Activated B cell treated with CpG ODN at 0.5 μM for 24 hours (primary cell): ENCODE measurements at regions of chr19 and their contacts with region 1.

Region 1: DNA sequence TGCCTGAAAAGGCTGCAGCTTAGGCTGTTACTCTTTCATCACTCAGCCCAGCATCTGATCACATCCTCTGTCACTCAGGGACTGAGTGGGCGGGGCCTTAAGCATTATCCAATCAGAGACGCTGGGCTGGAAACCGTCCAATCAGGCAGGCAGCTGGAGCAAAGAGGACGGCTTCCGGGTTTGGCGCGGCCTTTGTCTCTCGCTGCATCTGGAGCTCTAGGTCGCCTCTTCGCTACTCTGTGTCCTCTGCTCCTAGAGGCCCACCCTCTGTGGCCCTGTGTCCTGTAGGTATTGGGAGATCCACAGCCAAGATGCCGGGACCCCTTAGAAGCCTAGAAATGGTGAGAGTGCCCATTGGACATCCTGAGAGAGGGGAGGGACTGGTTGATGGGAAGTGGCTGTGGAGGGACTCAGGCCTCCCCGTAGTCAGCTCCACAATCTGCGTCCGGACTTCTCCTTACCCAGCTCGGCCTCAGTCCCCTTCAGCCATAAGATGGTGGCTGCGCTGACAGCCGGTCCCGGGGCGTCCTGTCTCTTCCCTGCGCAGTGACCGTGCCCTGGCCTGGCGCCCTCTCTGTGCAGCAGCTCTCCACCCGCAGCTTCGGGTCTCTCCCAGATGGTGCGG is at the start of gene ZNF486:
- DNase-seq: peak; percentile 80
- ATAC-seq: peak; percentile 96
- H3K4me3 Mint-ChIP-seq: peak within 1 kb of the TSS; percentile 99
- H3K27ac Mint-ChIP-seq: peak within 1 kb of the TSS; percentile 97
- H3K4me1 Mint-ChIP-seq: peaks cover 59% of the 10 kb centered on the region
- H3K27me3 Mint-ChIP-seq: no peaks in the 10 kb centered on the region
- CTCF ChIP-seq: no peak
- total RNA-seq, gene ZNF486: 13.5 and 16.2 TPM in 2 replicates

Region 2: GRCh38 chr19:19732579-19733501 is 434.3 kb before region 1 on chr19 and contains the start of gene ZNF14:
- CTCF ChIA-PET with region 1: no interaction called
- POLR2A ChIA-PET with region 1: no interaction called
- intact Hi-C with region 1: loop called (anchors 2 kb)
- DNase-seq: peak; percentile 79
- ATAC-seq: peak; percentile 99
- H3K4me3 Mint-ChIP-seq: peak within 1 kb of the TSS; percentile 99
- H3K27ac Mint-ChIP-seq: peak within 1 kb of the TSS; percentile 96
- H3K4me1 Mint-ChIP-seq: peaks cover 28% of the 10 kb centered on the region
- H3K27me3 Mint-ChIP-seq: no peaks in the 10 kb centered on the region
- CTCF ChIP-seq: no peak
- total RNA-seq, gene ZNF14: 11.8 and 13.4 TPM in 2 replicates

Region 3: GRCh38 chr19:19997656-19998268 is 169.4 kb before region 1 on chr19:
- CTCF ChIA-PET with region 1: interaction called, 12 read pairs
- POLR2A ChIA-PET with region 1: no interaction called
- intact Hi-C with region 1: no loop called
- DNase-seq: peak; percentile 29
- ATAC-seq: peak; percentile 64
- H3K4me3 Mint-ChIP-seq: no peak overlapping the region
- H3K27ac Mint-ChIP-seq: no peak overlapping the region
- H3K4me1 Mint-ChIP-seq: no peaks in the 10 kb centered on the region
- H3K27me3 Mint-ChIP-seq: no peaks in the 10 kb centered on the region
- CTCF ChIP-seq: peak; percentile 45

Region 4: DNA sequence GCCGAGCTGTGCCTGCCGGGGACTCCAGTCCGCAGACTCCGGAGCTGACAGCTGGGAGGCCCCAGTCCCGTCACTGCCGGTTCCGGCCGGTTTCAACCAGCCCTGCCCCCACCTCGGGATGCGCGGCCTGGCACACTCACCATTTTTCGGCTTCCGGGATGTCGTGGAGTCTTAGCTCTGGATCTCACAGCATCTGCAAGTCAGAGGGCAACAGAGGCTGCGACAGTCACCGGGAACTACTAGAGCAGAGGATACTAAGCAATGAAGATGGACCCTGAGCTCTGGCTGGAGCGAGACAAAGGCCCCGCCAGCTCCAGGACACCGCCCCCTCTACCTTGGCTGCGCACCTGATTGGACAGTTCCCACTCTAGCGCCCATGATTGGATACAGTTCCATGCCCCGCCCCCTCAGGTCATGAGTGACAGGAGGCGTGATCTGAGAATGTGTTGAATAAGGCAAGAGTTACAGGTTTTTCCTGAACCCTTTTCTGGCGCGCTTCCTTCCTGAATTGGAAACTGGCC is 127.9 kb before region 1 on chr19 and contains the start of gene ZNF682:
- CTCF ChIA-PET with region 1: no interaction called
- POLR2A ChIA-PET with region 1: interaction called, 15 read pairs
- intact Hi-C with region 1: loop called (anchors 5 kb)
- DNase-seq: peak; percentile 85
- ATAC-seq: peak; percentile 100
- H3K4me3 Mint-ChIP-seq: peak within 1 kb of the TSS; percentile 98
- H3K27ac Mint-ChIP-seq: peak within 1 kb of the TSS; percentile 92
- H3K4me1 Mint-ChIP-seq: peaks cover 14% of the 10 kb centered on the region
- H3K27me3 Mint-ChIP-seq: no peaks in the 10 kb centered on the region
- CTCF ChIP-seq: no peak
- total RNA-seq, gene ZNF682: 15.5 and 19.9 TPM in 2 replicates

Region 5: DNA sequence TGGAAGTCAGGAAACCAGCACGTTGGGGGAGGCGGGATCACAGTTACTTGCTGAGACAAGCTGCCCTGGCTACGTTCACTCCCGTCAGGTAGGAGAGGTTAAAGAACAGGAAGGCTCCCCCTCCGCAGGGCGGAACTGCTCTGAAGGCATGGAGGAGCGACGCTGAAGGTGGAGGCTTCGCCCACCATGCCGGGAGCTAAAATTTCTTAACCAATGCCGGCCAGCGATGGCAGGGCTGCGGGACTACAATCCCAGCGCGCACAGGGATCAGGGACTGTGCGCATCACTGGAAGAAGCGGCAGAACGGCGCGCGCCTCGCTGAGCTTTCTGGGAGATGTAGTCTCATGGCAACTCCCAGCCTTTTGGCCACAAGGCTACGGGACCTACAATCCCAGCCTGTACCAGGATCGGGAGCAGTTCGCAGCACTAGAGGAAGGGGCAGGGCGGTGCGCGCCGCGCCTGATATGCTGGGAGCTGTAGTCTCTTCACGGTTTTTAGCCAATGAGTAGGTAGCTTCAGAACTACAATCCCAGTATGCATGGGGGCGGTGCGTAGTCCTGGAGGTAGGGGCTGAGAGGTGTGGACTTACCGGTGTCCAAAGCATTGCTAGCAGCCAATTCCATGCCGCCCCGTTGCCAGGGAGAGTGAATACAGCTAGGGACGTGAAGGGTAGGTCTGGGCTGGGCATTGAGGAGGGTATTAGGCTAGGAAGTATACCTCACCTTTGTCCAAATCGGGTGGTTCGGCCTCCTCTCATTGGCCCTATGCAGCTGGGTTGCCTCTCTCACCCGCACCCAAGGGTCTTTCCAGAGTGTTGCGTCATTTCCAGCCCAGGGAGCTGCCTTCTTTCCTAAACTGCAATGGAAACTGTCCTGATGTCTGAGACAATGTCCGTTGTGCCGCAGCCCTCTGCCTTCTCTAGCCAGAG is 115.0 kb before region 1 on chr19:
- CTCF ChIA-PET with region 1: no interaction called
- POLR2A ChIA-PET with region 1: interaction called, 14 read pairs
- intact Hi-C with region 1: loop called (anchors 1 kb)
- DNase-seq: peak; percentile 55
- ATAC-seq: peak; percentile 95
- H3K4me3 Mint-ChIP-seq: peak overlapping the region; percentile 98
- H3K27ac Mint-ChIP-seq: peak overlapping the region; percentile 96
- H3K4me1 Mint-ChIP-seq: peaks cover 14% of the 10 kb centered on the region
- H3K27me3 Mint-ChIP-seq: no peaks in the 10 kb centered on the region
- CTCF ChIP-seq: no peak

Region 6: DNA sequence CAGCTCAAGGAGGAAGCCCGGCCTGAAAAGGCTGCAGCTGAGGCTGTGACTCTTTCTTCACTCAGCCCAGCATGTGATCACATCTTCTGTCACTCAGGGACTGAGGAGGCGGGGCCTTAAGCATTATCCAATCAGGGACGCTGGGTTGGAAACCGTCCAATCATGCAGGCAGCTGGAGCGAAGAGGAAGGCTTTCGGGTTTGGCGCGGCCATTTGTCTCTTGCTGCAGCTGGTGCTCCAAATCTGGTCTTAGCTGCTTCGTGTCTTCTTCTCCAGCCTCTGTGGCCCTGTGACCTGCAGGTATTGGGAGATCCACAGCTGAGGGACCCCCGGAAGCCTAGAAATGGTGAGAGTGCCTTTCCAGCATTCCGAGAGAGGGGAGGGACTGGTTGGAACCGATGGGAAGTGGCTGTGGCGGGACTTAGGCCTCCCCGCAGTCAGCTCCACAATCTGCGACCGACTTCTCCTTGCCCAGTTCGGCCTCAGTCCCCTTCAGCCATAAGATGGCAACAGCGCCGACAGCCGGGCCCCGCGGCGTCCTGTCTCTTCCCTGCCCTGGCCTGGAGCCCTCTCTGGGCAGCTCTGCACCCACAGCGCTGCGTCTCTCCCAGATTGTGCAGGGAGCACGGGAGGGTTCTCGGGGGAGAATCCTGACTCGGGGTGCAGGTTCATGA is 89.2 kb before region 1 on chr19 and contains the start of gene ZNF90:
- CTCF ChIA-PET with region 1: no interaction called
- POLR2A ChIA-PET with region 1: interaction called, 13 read pairs
- intact Hi-C with region 1: loop called (anchors 1 kb)
- DNase-seq: peak; percentile 73
- ATAC-seq: peak; percentile 99
- H3K4me3 Mint-ChIP-seq: peak within 1 kb of the TSS; percentile 96
- H3K27ac Mint-ChIP-seq: peak within 1 kb of the TSS; percentile 69
- H3K4me1 Mint-ChIP-seq: peaks cover 18% of the 10 kb centered on the region
- H3K27me3 Mint-ChIP-seq: no peaks in the 10 kb centered on the region
- CTCF ChIP-seq: no peak
- total RNA-seq, gene ZNF90: 9.8 and 12.5 TPM in 2 replicates

Region 7: DNA sequence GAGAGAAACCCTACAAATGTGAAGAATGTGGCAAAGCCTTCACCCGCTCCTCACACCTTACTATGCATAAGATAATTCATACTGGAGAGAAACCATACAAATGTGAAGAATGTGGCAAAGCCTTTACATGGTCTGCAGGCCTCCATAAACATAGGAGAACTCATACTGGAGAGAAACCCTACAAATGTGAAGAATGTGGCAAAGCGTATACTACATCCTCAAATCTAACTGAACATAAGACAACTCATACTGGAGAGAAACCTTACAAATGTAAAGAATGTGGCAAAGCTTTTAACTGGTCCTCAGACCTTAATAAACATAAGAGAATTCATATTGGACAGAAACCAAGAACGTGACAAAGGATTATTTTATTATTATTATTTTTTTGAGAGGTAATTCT is 30.6 kb after region 1 on chr19:
- CTCF ChIA-PET with region 1: no interaction called
- POLR2A ChIA-PET with region 1: no interaction called
- intact Hi-C with region 1: no loop called
- DNase-seq: no peak
- ATAC-seq: no peak
- H3K4me3 Mint-ChIP-seq: no peak overlapping the region
- H3K27ac Mint-ChIP-seq: no peak overlapping the region
- H3K4me1 Mint-ChIP-seq: no peaks in the 10 kb centered on the region
- H3K27me3 Mint-ChIP-seq: no peaks in the 10 kb centered on the region
- CTCF ChIP-seq: no peak

Region 8: DNA sequence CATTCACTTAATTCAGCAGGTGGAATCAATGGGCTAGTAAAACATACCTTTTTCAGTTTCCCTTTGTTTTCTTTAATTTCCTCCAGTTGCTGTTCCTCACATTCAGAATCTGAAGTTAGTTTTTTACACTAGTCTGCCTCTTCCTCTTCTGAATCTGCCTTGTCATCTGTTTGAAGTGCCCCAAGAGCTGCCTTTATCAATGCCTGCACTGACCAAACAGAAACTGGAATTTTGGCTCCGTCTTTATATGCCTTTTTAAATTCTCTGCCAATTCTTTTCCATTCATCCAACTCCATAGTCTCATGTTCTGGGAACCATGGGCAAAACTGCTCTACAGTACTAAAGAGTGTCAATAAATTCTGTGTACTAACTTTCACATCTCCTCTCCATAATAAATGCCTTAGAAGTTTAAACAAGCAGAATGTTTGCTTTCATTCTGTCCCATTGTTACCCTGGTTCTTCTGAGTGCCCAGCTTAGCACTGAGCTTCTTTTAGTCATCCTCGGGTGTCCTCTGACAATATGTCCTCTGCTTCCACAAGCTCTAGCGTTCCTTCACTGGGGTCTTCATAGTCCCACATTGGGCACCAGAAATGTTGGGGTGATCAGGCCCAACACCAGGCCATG is 154.1 kb after region 1 on chr19:
- CTCF ChIA-PET with region 1: no interaction called
- POLR2A ChIA-PET with region 1: no interaction called
- intact Hi-C with region 1: no loop called
- DNase-seq: no peak
- ATAC-seq: no peak
- H3K4me3 Mint-ChIP-seq: no peak overlapping the region
- H3K27ac Mint-ChIP-seq: no peak overlapping the region
- H3K4me1 Mint-ChIP-seq: no peaks in the 10 kb centered on the region
- H3K27me3 Mint-ChIP-seq: no peaks in the 10 kb centered on the region
- CTCF ChIP-seq: no peak